ENCODE measurements at regions of chr10 and their contacts with region 1.

Region 1: DNA sequence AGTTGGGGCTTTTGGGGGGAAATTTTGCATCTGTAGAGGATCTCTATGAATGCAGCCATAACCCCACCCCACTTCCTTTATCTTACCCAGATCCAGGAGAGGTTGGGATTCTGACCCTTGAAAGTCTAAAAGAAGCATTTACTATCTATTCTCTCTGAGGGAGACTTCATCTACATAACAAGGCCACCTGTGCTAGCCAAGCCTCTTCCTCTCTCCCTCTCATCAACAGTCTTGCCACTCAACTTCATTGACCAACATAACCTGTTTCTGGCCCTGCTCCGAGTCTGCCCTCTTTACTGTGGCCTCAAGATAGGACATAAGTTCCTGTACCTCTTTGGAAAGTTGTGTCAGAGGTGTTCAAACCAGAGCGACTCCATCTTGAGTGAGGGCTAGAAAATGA is 19.4 kb downstream of the TUBAL3 start:
- DNase-seq: no peak

Region 2: GRCh38 chr10:4813023-4813422 is 572.2 kb before region 1 on chr10:
- intact Hi-C with region 1: loop called (anchors 10 kb)
- DNase-seq: no peak

Region 3: GRCh38 chr10:5297466-5297865 is 87.8 kb before region 1 on chr10:
- intact Hi-C with region 1: loop called (anchors 5 kb)
- DNase-seq: peak; percentile 83

Region 4: GRCh38 chr10:5404208-5405041 is 19.2 kb after region 1 on chr10 and contains the start of gene TUBAL3:
- intact Hi-C with region 1: no loop called
- DNase-seq: no peak
- total RNA-seq, gene TUBAL3: 0.40 TPM

Region 5: DNA sequence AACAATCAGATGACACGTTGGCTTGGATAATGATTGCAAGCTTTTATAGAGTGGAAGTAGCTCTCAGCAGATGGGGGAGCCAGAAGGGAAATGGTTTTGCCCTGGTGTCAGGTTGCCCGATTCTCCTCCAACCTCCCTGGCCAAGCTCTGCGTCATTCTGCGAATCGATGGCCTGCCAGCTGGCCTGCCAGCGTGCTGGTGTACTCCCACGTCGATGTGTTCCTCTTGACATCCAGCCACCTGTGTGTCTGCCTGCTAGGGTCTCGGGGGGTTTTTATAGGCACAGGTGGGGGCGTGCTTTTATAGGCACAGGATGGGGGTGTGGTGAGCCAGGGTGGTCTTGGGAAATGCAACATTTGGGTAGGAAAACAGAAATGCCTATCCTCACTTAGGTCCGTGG is 31.8 kb after region 1 on chr10:
- intact Hi-C with region 1: no loop called
- DNase-seq: no peak

Region 6: DNA sequence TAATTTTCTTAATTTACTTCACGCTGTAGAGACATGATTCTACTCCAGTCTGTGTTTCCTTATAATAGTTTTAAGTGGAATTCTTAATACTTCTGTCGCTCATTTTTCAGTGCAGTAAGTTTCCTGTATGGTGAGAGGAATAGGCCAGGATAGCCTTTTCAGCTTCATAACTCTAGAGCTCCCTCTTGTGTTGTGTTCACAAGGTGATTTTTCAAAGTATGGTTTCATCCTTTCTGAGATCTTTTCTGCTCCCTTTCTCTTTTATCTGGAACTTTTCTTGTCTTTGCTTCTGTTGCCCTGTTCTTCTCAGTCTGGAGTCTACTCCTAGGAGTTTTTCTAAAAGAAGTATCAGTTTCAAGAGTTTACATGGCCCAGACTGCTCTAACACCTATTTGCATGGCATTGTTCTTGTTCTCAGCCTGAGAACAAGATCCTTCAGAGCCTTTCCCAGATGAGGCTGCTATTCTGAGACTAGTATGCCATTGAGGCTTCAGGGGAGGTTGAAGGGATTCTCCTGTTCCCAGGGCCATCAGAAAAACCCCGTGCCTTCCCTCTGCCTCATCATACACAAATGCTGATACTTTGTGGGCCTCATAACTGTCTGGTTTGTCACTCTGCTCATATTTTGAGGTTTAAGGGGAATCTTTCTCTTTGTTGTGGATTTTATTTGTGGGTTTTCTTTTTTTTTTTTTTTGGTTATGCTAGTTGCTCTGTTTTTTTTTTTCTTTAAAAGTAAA is 49.0 kb after region 1 on chr10:
- intact Hi-C with region 1: loop called (anchors 5 kb)
- DNase-seq: no peak

Region 7: GRCh38 chr10:5583525-5584175 is 198.4 kb after region 1 on chr10:
- intact Hi-C with region 1: no loop called
- DNase-seq: no peak